GM18951 (cell line): ENCODE measurements at regions of chr7 and their contacts with region 1.

Region 1: GRCh38 chr7:100852048-100852872 is at the start of gene SLC12A9:
- POLR2A ChIP-seq: peak; percentile 75

Region 2: GRCh38 chr7:100705753-100706671 is 146.2 kb before region 1 on chr7 and contains the start of gene POP7:
- in situ Hi-C with region 1: loop called (anchors 10 kb)
- POLR2A ChIP-seq: peak; percentile 86

Region 3: DNA sequence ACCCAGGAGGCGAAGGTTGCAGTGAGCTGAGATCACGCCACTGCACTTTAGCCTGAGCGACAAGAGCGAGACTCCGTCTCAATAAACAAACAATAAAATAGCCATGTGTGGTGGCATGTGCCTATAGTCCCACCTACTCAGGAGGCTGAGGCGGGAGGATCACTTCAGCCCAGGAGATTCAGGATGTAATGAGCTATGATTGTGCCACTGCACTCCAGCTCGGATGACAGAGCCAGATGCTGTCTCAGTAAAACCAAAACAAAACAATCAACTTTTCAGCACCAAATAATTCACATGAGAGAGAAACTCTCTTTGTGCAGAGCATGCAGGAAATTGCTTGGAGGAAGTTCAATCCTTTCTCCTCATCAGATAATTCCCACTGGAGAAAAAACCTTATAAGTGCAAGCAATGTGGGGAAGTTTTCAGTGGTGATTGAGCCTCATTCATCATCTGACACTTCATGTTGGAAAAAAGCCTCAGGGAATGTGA is 406.0 kb after region 1 on chr7:
- in situ Hi-C with region 1: no loop called
- POLR2A ChIP-seq: no peak